Activated CD4-positive, alpha-beta T cell treated with anti-CD3 and anti-CD28 coated beads, Interleukin-2, amount 10 ng/mL, durations not matched to agents 24 days and 14 days (primary cell): ENCODE measurements at regions of chr17 and their contacts with region 1.

Region 1: GRCh38 chr17:31013844-31014243 is 43.0 kb downstream of the RNF135 start:
- DNase-seq: no peak
- H3K4me3 Mint-ChIP-seq: no peak overlapping the region
- H3K27ac Mint-ChIP-seq: no peak overlapping the region
- H3K4me1 Mint-ChIP-seq: peaks cover 7% of the 10 kb centered on the region
- H3K27me3 Mint-ChIP-seq: peaks cover 13% of the 10 kb centered on the region

Region 2: DNA sequence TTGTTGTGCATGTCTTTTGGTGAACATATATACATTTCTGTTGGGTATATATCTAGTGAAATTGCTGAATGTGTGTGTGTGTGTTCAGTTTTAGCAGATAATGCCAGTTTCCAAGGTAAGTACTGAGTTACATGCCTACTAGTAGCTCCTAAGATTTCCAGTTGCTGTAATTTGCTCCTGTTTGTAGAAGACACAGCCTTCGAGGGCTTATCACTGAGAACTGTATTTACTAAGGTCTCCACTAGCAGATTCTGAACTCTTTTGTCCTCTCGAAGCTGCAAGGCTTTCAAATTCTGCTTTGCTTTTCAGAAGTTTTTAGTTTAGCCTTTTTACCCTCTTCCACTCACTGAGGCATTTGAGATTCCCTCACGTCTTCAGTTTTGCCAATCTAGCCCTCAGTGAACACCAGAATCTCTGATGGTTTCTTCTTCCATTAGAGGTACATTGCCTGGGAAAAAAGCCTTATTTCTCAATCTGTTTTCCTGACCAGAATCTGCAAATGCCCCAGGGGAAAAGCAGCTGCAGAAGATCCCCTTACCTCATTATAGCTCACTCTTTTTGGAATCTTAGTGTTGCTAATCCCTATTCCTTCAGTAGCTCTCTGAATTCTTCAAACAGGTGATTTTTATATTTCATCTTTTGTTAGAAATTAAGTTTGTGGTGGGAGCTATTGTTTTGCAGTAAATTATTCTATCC is 133.8 kb after region 1 on chr17:
- intact Hi-C with region 1: no loop called
- DNase-seq: no peak
- H3K4me3 Mint-ChIP-seq: no peak overlapping the region
- H3K27ac Mint-ChIP-seq: no peak overlapping the region
- H3K4me1 Mint-ChIP-seq: peaks cover 3% of the 10 kb centered on the region
- H3K27me3 Mint-ChIP-seq: no peaks in the 10 kb centered on the region

Region 3: GRCh38 chr17:31216053-31216751 is 202.4 kb after region 1 on chr17:
- intact Hi-C with region 1: loop called (anchors 2 kb)
- DNase-seq: no peak
- H3K4me3 Mint-ChIP-seq: no peak overlapping the region
- H3K27ac Mint-ChIP-seq: no peak overlapping the region
- H3K4me1 Mint-ChIP-seq: no peaks in the 10 kb centered on the region
- H3K27me3 Mint-ChIP-seq: no peaks in the 10 kb centered on the region

Region 4: DNA sequence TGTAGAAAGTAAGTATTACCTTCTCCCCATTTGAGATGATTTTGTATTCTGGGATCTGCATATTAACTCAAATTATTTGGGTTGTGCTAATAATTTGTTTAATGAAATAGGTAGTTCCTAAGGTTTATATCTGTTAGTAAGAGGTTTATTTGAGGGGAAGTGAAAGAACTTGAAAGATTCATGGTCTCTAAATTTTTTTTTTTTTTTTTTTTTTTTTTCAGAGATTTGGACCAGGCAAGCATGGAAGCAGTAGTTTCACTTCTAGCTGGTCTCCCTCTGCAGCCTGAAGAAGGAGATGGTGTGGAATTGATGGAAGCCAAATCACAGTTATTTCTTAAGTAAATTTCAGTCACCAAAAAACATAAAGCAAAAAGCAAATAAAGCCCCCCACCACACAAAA is 218.0 kb after region 1 on chr17:
- intact Hi-C with region 1: no loop called
- DNase-seq: no peak
- H3K4me3 Mint-ChIP-seq: no peak overlapping the region
- H3K27ac Mint-ChIP-seq: no peak overlapping the region
- H3K4me1 Mint-ChIP-seq: no peaks in the 10 kb centered on the region
- H3K27me3 Mint-ChIP-seq: no peaks in the 10 kb centered on the region